ENCODE measurements at regions of chrX and their contacts with region 1.

Region 1: GRCh38 chrX:29798469-29798868 is 416.9 kb upstream of the MAGEB2 start:
- DNase-seq: no peak
- ATAC-seq: no peak
- H3K4me3 ChIP-seq: no peak overlapping the region
- H3K27ac ChIP-seq: no peak overlapping the region
- H3K4me1 ChIP-seq: no peaks in the 10 kb centered on the region
- CTCF ChIP-seq: no peak
- EP300 ChIP-seq: no peak
- POLR2A ChIP-seq: no peak
- RAD21 ChIP-seq: no peak

Region 2: DNA sequence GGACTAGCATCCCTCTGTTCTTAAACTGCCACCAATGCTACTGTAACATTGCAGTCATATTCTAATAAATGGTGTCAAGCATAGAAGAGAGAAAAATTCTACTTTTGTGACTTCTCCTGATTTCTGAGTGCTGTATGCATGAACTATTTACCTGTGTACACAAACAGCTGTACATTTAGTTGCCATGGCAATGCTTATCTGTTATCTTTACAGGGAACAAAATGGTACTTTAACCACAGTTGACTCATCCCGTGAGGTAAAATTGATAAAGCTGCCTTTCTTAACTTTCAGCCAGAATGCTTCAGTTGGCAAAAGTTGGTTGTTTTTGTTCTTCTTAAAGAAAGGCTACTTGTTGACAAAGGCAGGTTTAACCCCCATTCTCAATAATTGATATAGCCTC is 170.6 kb before region 1 on chrX:
- CTCF ChIA-PET with region 1: no interaction called
- POLR2A ChIA-PET with region 1: interaction called, 10 read pairs
- DNase-seq: no peak
- ATAC-seq: no peak
- H3K4me3 ChIP-seq: no peak overlapping the region
- H3K27ac ChIP-seq: no peak overlapping the region
- H3K4me1 ChIP-seq: no peaks in the 10 kb centered on the region
- CTCF ChIP-seq: no peak
- EP300 ChIP-seq: no peak
- POLR2A ChIP-seq: no peak
- RAD21 ChIP-seq: no peak

Region 3: GRCh38 chrX:29841750-29842149 is 43.3 kb after region 1 on chrX:
- CTCF ChIA-PET with region 1: no interaction called
- POLR2A ChIA-PET with region 1: no interaction called
- DNase-seq: no peak
- ATAC-seq: no peak
- H3K4me3 ChIP-seq: no peak overlapping the region
- H3K27ac ChIP-seq: no peak overlapping the region
- H3K4me1 ChIP-seq: no peaks in the 10 kb centered on the region
- CTCF ChIP-seq: no peak
- EP300 ChIP-seq: no peak
- POLR2A ChIP-seq: no peak
- RAD21 ChIP-seq: no peak